ENCODE measurements at regions of chr15 and their contacts with region 1.

Region 1: GRCh38 chr15:60115579-60116380 is 111.7 kb downstream of the FOXB1 start:
- DNase-seq: no peak
- ATAC-seq: no peak
- H3K4me3 ChIP-seq: no peak overlapping the region
- H3K27ac ChIP-seq: no peak overlapping the region
- H3K4me1 ChIP-seq: no peaks in the 10 kb centered on the region
- H3K27me3 ChIP-seq: peaks cover 0 to 2% of the 10 kb centered on the region in 2 donors

Region 2: GRCh38 chr15:60052796-60053195 is 63.0 kb before region 1 on chr15:
- intact Hi-C with region 1: loop called in 1 of 2 experiments (anchors 10 kb)
- DNase-seq: no peak
- ATAC-seq: no peak
- H3K4me3 ChIP-seq: no peak overlapping the region
- H3K27ac ChIP-seq: no peak overlapping the region
- H3K4me1 ChIP-seq: no peaks in the 10 kb centered on the region
- H3K27me3 ChIP-seq: no peaks in the 10 kb centered on the region

Region 3: GRCh38 chr15:60179786-60180391 is 64.1 kb after region 1 on chr15:
- intact Hi-C with region 1: no loop called
- DNase-seq: no peak
- ATAC-seq: no peak
- H3K4me3 ChIP-seq: no peak overlapping the region
- H3K27ac ChIP-seq: no peak overlapping the region
- H3K4me1 ChIP-seq: no peaks in the 10 kb centered on the region
- H3K27me3 ChIP-seq: no peaks in the 10 kb centered on the region

Measured in aorta (tissue), 5 donors.